GM18951 (cell line): ENCODE measurements at regions of chr10 and their contacts with region 1.

Region 1: DNA sequence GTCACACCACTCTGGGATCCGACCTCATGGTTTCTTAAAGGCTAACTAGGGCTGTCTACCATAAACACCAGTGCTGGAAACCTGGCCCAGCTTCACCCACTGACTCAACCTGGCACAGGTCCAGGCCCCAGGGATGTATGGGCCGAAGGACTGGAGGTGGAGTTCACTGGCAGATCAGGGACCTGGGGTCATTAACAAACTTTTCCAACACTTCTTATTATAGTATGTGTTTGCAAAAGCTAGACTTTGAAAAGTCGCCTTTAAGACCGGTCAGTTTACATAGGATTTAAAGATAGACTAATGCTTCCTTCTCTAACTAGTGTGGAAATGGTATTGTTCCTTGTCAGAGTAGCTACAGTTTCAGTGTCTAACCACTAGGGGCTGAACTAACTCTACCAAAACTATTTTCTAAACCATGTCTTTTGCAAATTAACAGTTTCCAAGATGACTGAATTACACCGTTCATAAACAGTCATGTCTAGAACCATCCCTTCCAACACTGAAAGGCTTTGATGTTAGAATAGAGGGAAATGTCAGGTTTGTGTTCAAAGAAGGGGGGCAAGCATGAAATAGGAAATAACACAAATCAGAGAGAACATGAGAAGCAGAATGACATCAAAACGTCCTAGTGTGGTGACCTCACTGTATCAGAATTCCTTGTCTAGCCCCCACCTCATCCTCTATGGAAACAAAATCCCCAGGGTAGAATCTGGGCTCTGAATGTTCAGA is 29.7 kb downstream of the STN1 start:
- POLR2A ChIP-seq: no peak

Region 2: DNA sequence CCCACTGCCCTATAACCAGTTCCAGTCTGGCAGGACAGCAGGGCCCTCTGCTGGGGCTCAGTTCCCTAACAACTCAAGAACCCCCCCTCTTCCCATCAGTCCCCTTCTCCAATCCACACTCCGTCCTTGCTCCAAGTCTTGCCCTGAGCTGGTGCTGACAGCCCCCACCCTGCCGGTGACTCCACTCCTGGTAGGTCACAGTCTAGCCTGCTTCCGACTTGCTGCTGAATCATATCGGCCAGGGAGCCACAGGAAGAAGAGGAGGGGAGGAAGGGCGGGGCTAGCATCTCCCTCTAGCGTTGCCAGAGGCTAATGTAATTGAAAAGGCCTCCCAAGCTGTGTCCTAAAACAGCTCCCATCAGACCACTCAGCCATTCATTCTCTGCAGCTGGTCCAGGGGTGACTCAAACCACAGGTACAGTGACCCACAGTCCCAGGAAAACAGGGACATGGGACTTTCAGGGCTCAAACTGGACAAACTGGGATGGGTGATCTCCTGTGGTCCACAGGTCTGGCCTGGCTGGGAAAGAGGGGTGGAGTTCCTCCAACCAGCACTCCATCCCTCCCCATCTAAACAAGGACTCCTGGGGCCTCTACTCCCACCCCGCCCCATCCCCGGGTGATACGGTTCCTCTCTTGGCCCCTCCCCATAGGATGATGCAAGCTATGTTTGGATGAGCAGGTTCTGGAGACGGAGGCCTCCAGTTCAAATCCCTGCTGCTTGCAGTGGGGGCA is 191.7 kb before region 1 on chr10:
- in situ Hi-C with region 1: no loop called
- POLR2A ChIP-seq: peak; percentile 54

Region 3: DNA sequence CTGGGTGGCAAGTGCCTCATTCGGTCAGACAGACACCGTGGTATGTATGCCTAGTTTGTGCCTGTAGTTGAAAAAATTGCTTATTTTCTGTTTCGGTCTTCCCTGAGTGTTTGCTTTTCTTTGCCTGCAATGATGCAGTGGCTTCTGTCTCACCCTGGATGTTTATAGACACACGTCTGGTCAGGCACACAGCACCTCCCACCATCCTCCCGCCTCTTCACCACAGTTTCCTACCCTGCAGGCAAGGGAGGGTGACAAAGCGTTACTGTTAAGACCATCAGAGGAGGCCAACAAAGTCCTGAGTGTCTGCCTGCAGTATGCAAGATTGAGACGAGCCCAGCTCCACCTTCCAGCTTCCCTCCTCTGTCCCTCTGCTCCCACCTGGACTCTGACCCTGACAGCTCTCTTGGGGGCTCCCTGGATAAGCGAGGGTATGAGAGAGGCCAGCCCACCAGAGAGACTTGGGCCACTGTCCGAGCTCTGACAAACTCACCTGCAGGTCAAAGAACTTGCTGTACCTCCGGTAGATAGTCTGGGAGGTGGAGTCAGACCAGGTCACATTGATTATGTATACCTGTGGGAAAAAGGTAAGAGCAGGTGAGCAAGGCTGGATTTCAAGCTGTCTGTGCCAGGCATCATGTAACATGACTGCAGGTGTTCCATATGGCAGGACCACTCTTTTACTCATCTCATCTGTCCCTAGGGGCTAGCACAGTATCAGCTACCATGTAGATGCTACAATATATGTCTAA is 87.3 kb before region 1 on chr10:
- in situ Hi-C with region 1: no loop called
- POLR2A ChIP-seq: no peak

Region 4: DNA sequence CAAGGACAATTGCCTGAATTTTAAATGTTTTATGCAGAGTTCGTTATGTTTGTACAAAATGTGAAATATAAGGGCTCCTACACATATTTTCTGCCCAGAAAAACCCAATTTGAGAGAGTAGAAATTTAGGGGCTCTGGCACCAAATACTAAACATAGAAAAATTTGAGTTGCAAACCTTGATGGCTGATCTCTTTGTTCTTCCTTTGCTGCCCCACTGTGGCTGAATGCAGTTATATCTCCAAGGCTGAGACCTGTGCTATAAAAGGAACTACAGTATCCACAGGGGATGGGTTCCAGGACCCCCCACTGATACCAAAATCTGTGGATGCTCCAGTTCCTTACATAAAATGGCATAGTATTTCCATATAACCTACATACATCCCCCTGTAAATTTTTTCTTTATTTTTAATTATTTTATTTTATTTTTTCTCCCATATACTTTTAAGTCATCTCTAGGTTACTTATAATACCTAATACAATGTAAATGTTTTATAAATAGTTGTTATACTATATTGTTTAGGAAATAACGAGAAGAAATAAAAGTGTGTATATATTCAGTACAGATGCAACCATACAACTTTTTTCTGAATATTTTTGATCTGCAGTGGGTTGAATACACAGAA is 321.4 kb after region 1 on chr10:
- in situ Hi-C with region 1: loop called (anchors 10 kb)
- POLR2A ChIP-seq: no peak